ENCODE measurements at regions of chr5 and their contacts with region 1.

Region 1: GRCh38 chr5:123036391-123037103 is at the start of gene PPIC:
- DNase-seq: peak; percentile 24
- H3K4me3 Mint-ChIP-seq: peak within 1 kb of the TSS; percentile 56
- H3K27ac Mint-ChIP-seq: no peak within 1 kb of the TSS
- H3K4me1 Mint-ChIP-seq: peaks cover 7% of the 10 kb centered on the region
- H3K27me3 Mint-ChIP-seq: peaks cover 54% of the 10 kb centered on the region
- total RNA-seq, gene PPIC: not detected

Region 2: DNA sequence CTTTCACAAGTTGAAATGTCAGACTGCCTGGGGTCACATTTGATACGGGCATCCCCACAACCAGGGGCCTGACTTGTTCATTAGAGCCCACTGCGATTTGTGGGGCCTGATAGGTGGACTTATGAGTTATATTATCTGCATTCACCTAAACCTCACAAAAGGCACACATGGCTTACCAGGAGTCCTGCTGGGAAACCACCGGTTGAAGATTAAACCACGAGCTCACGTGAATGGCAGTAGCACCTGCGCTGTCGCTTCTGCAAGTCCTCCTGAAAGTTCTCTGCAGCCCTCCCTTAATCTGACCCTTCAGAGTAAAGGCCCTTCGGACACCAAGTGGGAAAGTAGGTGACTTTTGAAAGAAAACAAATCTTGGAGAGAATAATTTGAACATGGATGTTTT is 68.9 kb before region 1 on chr5:
- CTCF ChIA-PET with region 1: no interaction called
- intact Hi-C with region 1: no loop called
- DNase-seq: no peak
- H3K4me3 Mint-ChIP-seq: no peak overlapping the region
- H3K27ac Mint-ChIP-seq: no peak overlapping the region
- H3K4me1 Mint-ChIP-seq: no peaks in the 10 kb centered on the region
- H3K27me3 Mint-ChIP-seq: no peaks in the 10 kb centered on the region

Region 3: DNA sequence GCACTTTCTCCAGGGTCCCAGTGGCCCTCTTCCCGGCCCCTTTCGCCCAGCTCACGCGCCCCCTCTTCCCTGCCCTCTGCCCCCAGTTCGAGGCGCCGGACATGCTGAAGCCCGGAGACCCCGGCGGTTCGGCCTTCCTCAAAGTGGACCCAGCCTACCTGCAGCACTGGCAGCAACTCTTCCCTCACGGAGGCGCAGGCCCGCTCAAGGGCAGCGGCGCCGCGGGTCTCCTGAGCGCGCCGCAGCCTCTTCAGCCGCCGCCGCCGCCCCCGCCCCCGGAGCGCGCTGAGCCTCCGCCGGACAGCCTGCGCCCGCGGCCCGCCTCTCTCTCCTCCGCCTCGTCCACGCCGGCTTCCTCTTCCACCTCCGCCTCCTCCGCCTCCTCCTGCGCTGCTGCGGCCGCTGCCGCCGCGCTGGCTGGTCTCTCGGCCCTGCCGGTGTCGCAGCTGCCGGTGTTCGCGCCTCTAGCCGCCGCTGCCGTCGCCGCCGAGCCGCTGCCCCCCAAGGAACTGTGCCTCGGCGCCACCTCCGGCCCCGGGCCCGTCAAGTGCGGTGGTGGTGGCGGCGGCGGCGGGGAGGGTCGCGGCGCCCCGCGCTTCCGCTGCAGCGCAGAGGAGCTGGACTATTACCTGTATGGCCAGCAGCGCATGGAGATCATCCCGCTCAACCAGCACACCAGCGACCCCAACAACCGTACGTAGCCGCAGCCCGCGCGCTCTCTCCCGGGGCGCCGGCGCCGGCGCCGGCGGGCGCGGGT is 53.5 kb after region 1 on chr5:
- CTCF ChIA-PET with region 1: no interaction called
- intact Hi-C with region 1: loop called (anchors 2 kb)
- DNase-seq: no peak
- H3K4me3 Mint-ChIP-seq: no peak overlapping the region
- H3K27ac Mint-ChIP-seq: no peak overlapping the region
- H3K4me1 Mint-ChIP-seq: peaks cover 30% of the 10 kb centered on the region
- H3K27me3 Mint-ChIP-seq: peaks cover 72% of the 10 kb centered on the region

Region 4: DNA sequence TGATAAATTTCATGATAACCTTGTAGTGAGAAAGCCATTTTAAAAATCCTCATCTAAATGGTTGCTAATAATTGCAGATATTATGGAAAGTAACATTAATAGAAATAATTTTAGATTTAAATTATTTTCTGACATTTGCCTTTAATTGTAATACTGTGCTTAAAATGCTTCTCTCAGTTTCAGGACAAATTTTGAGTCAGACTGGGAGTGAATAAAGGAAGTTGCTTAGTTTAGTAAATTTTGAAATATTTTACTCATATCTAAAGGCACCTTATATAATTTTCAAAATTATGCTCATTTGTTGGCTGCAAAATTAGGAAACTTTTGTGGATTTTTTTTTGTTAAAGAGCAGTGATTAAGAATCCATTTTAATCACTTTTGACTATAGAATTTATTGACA is 569.3 kb after region 1 on chr5:
- CTCF ChIA-PET with region 1: no interaction called
- intact Hi-C with region 1: loop called (anchors 10 kb)
- DNase-seq: no peak
- H3K4me3 Mint-ChIP-seq: no peak overlapping the region
- H3K27ac Mint-ChIP-seq: no peak overlapping the region
- H3K4me1 Mint-ChIP-seq: no peaks in the 10 kb centered on the region
- H3K27me3 Mint-ChIP-seq: no peaks in the 10 kb centered on the region

Measured in activated naive CD4-positive, alpha-beta T cell treated with anti-CD3 and anti-CD28 coated beads for 36 hours (primary cell).